ENCODE measurements at regions of chr17 and their contacts with region 1.

Region 1: GRCh38 chr17:63714547-63715277 is 14.8 kb upstream of the LIMD2 start:
- DNase-seq: no peak
- H3K4me3 ChIP-seq: no peak overlapping the region
- H3K27ac ChIP-seq: no peak overlapping the region
- H3K4me1 ChIP-seq: no peaks in the 10 kb centered on the region
- H3K27me3 ChIP-seq: no peaks in the 10 kb centered on the region
- CTCF ChIP-seq: no peak

Region 2: GRCh38 chr17:63490321-63490720 is 224.4 kb before region 1 on chr17:
- CTCF ChIA-PET with region 1: interaction called, 11 read pairs
- POLR2A ChIA-PET with region 1: no interaction called
- intact Hi-C with region 1: no loop called
- DNase-seq: no peak
- H3K4me3 ChIP-seq: no peak overlapping the region
- H3K27ac ChIP-seq: no peak overlapping the region
- H3K4me1 ChIP-seq: no peaks in the 10 kb centered on the region
- H3K27me3 ChIP-seq: peaks cover 73% of the 10 kb centered on the region
- CTCF ChIP-seq: no peak